ENCODE measurements at regions of chr2 and their contacts with region 1.

Region 1: DNA sequence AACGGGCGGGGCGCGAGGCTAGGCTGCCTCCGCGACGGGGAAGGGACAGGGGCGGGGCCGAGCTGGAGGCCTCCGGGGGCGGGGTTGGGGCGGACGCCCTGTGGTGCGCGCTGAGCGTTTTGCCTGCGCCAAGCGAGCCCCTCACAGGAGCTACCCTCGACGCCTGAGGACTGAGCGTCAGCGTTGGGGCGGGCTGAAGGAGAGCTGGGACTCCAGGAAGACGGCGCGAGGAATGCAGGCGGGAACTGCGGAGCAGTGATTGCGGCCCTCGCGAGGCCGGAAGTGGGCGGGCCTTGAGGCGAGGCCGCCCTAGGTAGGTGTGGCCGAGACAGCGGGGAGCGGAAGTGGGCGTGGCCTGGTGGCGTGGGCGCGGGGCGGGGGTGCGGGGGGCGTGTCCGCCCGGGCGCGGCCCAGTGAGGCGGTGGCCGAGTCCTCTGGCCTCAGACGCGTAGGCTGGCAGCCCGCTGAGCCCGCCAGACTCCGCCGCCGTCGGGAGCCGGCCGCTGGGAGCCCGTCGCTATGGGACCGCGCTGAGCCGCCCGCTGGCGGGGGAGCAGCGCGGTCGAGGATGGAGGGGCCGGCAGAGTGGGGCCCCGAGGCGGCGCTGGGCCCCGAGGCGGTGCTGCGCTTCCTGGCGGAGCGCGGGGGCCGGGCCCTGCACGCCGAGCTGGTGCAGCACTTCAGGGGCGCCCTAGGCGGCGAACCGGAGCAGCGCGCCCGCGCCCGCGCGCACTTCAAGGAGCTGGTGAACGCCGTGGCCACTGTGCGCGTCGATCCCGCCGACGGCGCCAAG is at the starts of genes SEPTIN10 and SOWAHC:
- DNase-seq: peak; percentile 86 to 91
- ATAC-seq: peak; percentile 89 to 92
- H3K4me3 ChIP-seq: peak within 1 kb of the TSS; percentile 66 to 83 (median 70)
- H3K27ac ChIP-seq: peak within 1 kb of the TSS; percentile 83 to 98 (median 95)
- H3K4me1 ChIP-seq: peaks cover 15 to 23% of the 10 kb centered on the region in 2 donors
- H3K27me3 ChIP-seq: no peaks in the 10 kb centered on the region
- CTCF ChIP-seq: no peak
- POLR2A ChIP-seq: peak; percentile 69 to 79
- total RNA-seq, gene SEPTIN10: 22.3 to 39.4 (median 29.6) TPM
- total RNA-seq, gene SOWAHC: 0.75 to 1.4 (median 0.96) TPM

Region 2: DNA sequence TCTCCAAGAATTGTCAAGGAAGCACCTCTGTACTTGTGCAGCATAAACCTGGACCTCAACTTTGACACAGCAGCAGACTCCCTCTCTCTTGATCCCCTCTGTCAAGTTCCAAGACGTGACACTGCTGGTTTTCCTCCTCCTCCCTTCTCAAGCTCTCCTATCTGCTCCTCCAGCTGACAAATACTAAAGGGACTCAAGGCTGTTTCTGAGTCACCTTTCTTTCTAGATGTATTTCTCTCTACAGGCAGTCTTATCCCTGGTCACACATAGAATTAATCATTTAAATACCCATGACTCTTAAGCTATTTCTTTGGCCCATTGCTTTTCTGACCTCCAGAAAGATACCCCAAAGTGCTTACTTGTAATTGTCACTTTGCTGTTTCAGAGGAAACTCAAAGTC is 53.9 kb before region 1 on chr2:
- in situ Hi-C with region 1: no loop called
- intact Hi-C with region 1: loop called (anchors 5 kb)
- DNase-seq: no peak
- ATAC-seq: no peak
- H3K4me3 ChIP-seq: no peak overlapping the region
- H3K27ac ChIP-seq: no peak overlapping the region
- H3K4me1 ChIP-seq: no peaks in the 10 kb centered on the region
- H3K27me3 ChIP-seq: no peaks in the 10 kb centered on the region
- CTCF ChIP-seq: no peak
- POLR2A ChIP-seq: no peak

Region 3: GRCh38 chr2:109726379-109727270 is 112.5 kb after region 1 on chr2:
- in situ Hi-C with region 1: no loop called
- intact Hi-C with region 1: loop called (anchors 5 kb)
- DNase-seq: no peak
- ATAC-seq: no peak
- H3K4me3 ChIP-seq: no peak overlapping the region
- H3K27ac ChIP-seq: no peak overlapping the region
- H3K4me1 ChIP-seq: no peaks in the 10 kb centered on the region
- H3K27me3 ChIP-seq: peaks cover 0 to 4% (median 0%) of the 10 kb centered on the region in 3 donors
- CTCF ChIP-seq: no peak
- POLR2A ChIP-seq: no peak